Right ventricle myocardium inferior (tissue), 1 donor: ENCODE measurements at regions of chr13 and their contacts with region 1.

Region 1: DNA sequence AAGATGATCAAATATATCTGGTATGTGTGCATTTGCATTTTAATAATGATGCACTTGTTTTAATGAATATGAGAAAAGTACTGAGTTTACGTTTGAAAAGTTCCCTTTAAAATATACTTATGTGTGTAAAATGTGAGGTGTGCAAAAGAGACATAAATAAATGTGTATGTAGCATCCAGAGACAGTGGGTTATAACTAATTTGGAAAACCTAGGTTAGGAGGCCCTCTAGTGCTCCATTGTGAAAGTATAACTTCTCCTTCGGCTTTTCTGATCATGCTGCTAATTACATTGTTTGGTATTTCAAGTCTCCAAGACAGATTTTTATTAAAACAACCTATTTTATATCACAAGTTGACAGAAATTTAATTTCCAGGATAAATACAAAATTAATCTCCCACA is 30.1 kb downstream of the SCEL start:
- DNase-seq: no peak
- ATAC-seq: no peak

Region 2: GRCh38 chr13:76837801-76838200 is 727.8 kb before region 1 on chr13:
- intact Hi-C with region 1: no loop called
- DNase-seq: no peak
- ATAC-seq: no peak

Region 3: DNA sequence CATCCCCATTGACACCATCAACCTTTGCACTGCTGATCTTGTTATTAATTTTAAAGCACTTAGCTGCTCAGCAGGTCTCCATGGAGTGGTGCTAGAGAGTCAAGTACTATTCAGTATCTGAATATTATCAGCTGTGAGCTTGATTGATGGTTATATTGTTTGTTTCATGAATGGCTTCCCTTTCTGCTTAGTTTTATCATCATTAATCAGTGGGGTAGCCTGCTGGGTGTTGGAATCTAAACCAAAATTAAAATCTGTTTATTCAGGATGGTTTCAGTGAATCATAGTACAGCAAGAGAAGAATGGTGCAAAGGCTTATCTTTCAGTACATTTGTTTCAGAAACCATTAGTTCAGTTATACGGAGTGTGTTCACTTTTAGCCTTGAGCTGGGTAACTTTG is 72.7 kb before region 1 on chr13:
- intact Hi-C with region 1: loop called (anchors 5 kb)
- DNase-seq: no peak
- ATAC-seq: no peak